ENCODE measurements at regions of chr7 and their contacts with region 1.

Region 1: GRCh38 chr7:29748286-29749108 is 57.8 kb upstream of the WIPF3 start:
- DNase-seq: no peak
- ATAC-seq: peak; percentile 74
- H3K4me3 Mint-ChIP-seq: no peak overlapping the region
- H3K27ac Mint-ChIP-seq: no peak overlapping the region
- H3K4me1 Mint-ChIP-seq: no peaks in the 10 kb centered on the region
- H3K27me3 Mint-ChIP-seq: no peaks in the 10 kb centered on the region
- CTCF ChIP-seq: peak; percentile 16; the same call in 1 of the 2 replicates

Region 2: DNA sequence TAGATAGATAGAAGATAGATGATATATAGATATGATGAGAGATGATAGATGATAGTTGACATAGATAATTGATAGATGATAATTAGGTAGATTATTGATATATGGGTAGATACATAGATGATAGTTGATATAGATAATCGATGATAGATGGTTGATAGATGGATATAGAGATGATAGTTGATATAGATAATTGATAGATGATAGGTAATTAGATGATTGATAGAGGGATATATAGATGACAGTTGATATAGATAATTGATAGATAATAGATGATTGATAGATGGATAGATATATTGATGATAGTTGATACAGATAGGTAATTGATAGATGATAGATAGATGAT is 112.5 kb before region 1 on chr7:
- CTCF ChIA-PET with region 1: interaction called, 14 read pairs
- POLR2A ChIA-PET with region 1: no interaction called
- DNase-seq: no peak
- ATAC-seq: no peak
- H3K4me3 Mint-ChIP-seq: no peak overlapping the region
- H3K27ac Mint-ChIP-seq: no peak overlapping the region
- H3K4me1 Mint-ChIP-seq: peaks cover 10% of the 10 kb centered on the region
- H3K27me3 Mint-ChIP-seq: no peaks in the 10 kb centered on the region
- CTCF ChIP-seq: no peak

Region 3: GRCh38 chr7:29734246-29734731 is 14.2 kb before region 1 on chr7:
- CTCF ChIA-PET with region 1: no interaction called
- POLR2A ChIA-PET with region 1: no interaction called
- DNase-seq: no peak
- ATAC-seq: no peak
- H3K4me3 Mint-ChIP-seq: no peak overlapping the region
- H3K27ac Mint-ChIP-seq: no peak overlapping the region
- H3K4me1 Mint-ChIP-seq: no peaks in the 10 kb centered on the region
- H3K27me3 Mint-ChIP-seq: no peaks in the 10 kb centered on the region; the same call in 1 of the 2 replicates
- CTCF ChIP-seq: no peak

Region 4: DNA sequence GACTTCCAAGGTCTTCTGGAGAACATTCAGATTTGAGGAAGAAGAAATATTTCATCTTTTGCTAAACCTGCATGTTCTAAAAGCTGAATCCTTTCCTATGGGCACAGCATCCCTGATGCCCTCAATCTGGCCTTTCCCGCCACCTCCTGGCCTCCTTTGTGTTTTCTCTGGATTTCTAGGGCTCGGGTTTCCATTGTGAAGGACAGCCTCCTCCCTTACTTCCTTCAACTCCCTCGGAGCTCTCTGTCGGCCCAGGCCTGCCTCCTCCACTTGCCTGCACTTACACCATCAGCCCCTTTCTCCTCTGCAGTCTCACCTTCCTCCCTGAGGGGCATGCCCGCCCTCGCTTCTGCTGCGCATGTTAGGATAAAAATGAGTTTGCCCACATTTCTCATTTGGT is 133.2 kb after region 1 on chr7:
- CTCF ChIA-PET with region 1: interaction called, 20 read pairs
- POLR2A ChIA-PET with region 1: no interaction called
- DNase-seq: peak; percentile 59
- ATAC-seq: peak; percentile 73
- H3K4me3 Mint-ChIP-seq: no peak overlapping the region
- H3K27ac Mint-ChIP-seq: no peak overlapping the region
- H3K4me1 Mint-ChIP-seq: peaks cover 31% of the 10 kb centered on the region
- H3K27me3 Mint-ChIP-seq: no peaks in the 10 kb centered on the region; the same call in 1 of the 2 replicates
- CTCF ChIP-seq: no peak

Measured in WTC11 (cell line).